Ovary (tissue), 10 donors: ENCODE measurements at regions of chr14 and their contacts with region 1.

Region 1: GRCh38 chr14:52473557-52473956 is 78.7 kb downstream of the TXNDC16 start:
- DNase-seq: no peak
- H3K4me3 ChIP-seq: no peak overlapping the region
- H3K27ac ChIP-seq: no peak overlapping the region
- H3K4me1 ChIP-seq: no peaks in the 10 kb centered on the region
- H3K27me3 ChIP-seq: no peaks in the 10 kb centered on the region
- CTCF ChIP-seq: peak in 1 of 3 donors; percentile 24
- EP300 ChIP-seq: no peak
- POLR2A ChIP-seq: no peak

Region 2: GRCh38 chr14:52299692-52300278 is 173.8 kb before region 1 on chr14:
- intact Hi-C with region 1: loop called in 2 of 4 experiments (anchors 10 kb)
- DNase-seq: no peak
- H3K4me3 ChIP-seq: no peak overlapping the region
- H3K27ac ChIP-seq: no peak overlapping the region
- H3K4me1 ChIP-seq: no peaks in the 10 kb centered on the region
- H3K27me3 ChIP-seq: no peaks in the 10 kb centered on the region
- CTCF ChIP-seq: peak in 2 of 3 donors; percentile 46 to 57
- EP300 ChIP-seq: no peak
- POLR2A ChIP-seq: no peak